ENCODE measurements at regions of chrX and their contacts with region 1.

Region 1: GRCh38 chrX:56618323-56618722 is 54.9 kb downstream of the UBQLN2 start:
- DNase-seq: no peak
- H3K4me3 ChIP-seq: no peak overlapping the region
- H3K27ac ChIP-seq: no peak overlapping the region
- H3K4me1 ChIP-seq: no peaks in the 10 kb centered on the region
- H3K27me3 ChIP-seq: no peaks in the 10 kb centered on the region
- CTCF ChIP-seq: no peak
- POLR2A ChIP-seq: no peak

Region 2: DNA sequence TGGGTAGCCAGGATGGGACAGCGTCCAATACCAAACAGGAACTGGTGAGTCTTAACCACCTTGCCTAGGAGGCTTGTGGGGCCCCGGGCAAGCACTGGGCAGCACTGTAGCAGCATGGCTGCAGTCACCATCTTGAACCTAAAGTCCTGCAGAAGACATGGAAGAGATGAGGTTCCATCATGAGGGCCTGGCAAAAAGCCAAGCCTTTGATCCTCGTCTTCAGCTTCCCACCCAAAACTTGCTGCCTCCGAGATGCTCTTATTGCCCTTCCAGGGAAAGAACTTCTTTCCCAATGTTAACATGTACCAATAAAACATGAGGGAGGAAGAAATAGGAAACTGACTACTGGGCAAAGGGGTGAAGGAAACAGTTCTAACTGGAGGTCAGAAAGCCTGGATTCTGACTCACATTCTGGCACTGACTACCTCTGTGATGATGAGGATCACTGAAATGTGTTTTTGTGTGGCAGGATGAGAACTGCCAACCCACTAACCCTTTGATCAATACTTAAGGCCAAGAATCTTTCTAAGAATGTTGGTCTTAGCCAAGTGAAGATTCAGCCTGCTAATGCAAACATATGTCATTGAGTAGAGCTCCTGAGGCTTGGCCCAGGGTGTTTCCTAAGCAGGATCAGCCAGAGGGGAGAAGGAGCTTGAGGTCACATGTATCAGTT is 1592.3 kb before region 1 on chrX:
- intact Hi-C with region 1: loop called (anchors 10 kb)
- DNase-seq: no peak
- H3K4me3 ChIP-seq: no peak overlapping the region
- H3K27ac ChIP-seq: no peak overlapping the region
- H3K4me1 ChIP-seq: no peaks in the 10 kb centered on the region
- H3K27me3 ChIP-seq: no peaks in the 10 kb centered on the region
- CTCF ChIP-seq: no peak
- POLR2A ChIP-seq: no peak

Region 3: GRCh38 chrX:56563231-56564161 is 54.8 kb before region 1 on chrX and contains the start of gene UBQLN2:
- intact Hi-C with region 1: no loop called
- DNase-seq: no peak
- H3K4me3 ChIP-seq: peak within 1 kb of the TSS; percentile 50 to 65
- H3K27ac ChIP-seq: peak within 1 kb of the TSS; percentile 92
- H3K4me1 ChIP-seq: peaks cover 13% of the 10 kb centered on the region
- H3K27me3 ChIP-seq: no peaks in the 10 kb centered on the region
- CTCF ChIP-seq: no peak
- POLR2A ChIP-seq: peak in 1 of 2 donors; percentile 79
- total RNA-seq, gene UBQLN2: 26.8 TPM